CD8-positive, alpha-beta memory T cell (primary cell): ENCODE measurements at regions of chr3 and their contacts with region 1.

Region 1: GRCh38 chr3:125374501-125374995 is 577 bp downstream of the ZNF148 start:
- DNase-seq: peak in 3 of 5 donors; percentile 31 to 62 (median 41)
- H3K4me3 ChIP-seq: peak overlapping the region; percentile 95
- H3K4me3 Mint-ChIP-seq: peak overlapping the region; percentile 84 to 100 (median 95)
- H3K27ac ChIP-seq: peak overlapping the region; percentile 67
- H3K27ac Mint-ChIP-seq: peak overlapping the region; percentile 66 to 99 (median 96)
- H3K4me1 ChIP-seq: peaks cover 23% of the 10 kb centered on the region
- H3K4me1 Mint-ChIP-seq: peaks cover 44 to 56% (median 56%) of the 10 kb centered on the region in 3 donors
- H3K27me3 ChIP-seq: no peaks in the 10 kb centered on the region
- H3K27me3 Mint-ChIP-seq: no peaks in the 10 kb centered on the region

Region 2: GRCh38 chr3:125098611-125099291 is 275.8 kb before region 1 on chr3:
- CTCF ChIA-PET with region 1: no interaction called
- POLR2A ChIA-PET with region 1: no interaction called
- DNase-seq: no peak
- H3K4me3 ChIP-seq: no peak overlapping the region
- H3K4me3 Mint-ChIP-seq: no peak overlapping the region
- H3K27ac ChIP-seq: no peak overlapping the region
- H3K27ac Mint-ChIP-seq: no peak overlapping the region
- H3K4me1 ChIP-seq: no peaks in the 10 kb centered on the region
- H3K4me1 Mint-ChIP-seq: no peaks in the 10 kb centered on the region
- H3K27me3 ChIP-seq: no peaks in the 10 kb centered on the region
- H3K27me3 Mint-ChIP-seq: peaks cover 2 to 6% of the 10 kb centered on the region in 2 donors

Region 3: DNA sequence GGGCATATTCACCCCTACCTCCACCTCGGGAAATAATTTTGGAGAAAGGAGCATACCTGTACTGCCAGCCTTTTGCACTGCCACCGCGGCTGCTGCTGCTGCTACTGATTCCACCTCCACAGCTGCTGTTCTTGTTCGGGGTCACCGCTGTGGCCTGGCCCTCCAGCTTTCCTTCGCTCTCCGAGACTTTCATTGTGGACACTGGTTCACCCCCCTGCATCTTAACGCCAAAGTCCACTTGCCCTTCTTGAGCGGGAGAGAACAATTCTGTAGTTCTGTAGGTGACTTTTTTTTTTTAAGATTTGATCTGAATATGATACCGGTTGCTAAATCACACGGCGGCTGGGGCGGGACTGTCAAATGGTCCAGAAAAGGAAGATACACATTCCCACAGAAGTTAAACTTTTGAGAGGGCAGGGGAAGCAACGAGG is 220.0 kb after region 1 on chr3:
- CTCF ChIA-PET with region 1: no interaction called
- POLR2A ChIA-PET with region 1: interaction called, 10 read pairs
- DNase-seq: peak in 1 of 5 donors; percentile 12
- H3K4me3 ChIP-seq: peak overlapping the region; percentile 62
- H3K4me3 Mint-ChIP-seq: peak overlapping the region; percentile 92 to 100 (median 97)
- H3K27ac ChIP-seq: peak overlapping the region; percentile 65
- H3K27ac Mint-ChIP-seq: peak overlapping the region; percentile 86 to 99 (median 96)
- H3K4me1 ChIP-seq: peaks cover 23% of the 10 kb centered on the region
- H3K4me1 Mint-ChIP-seq: peaks cover 39 to 60% (median 46%) of the 10 kb centered on the region in 3 donors
- H3K27me3 ChIP-seq: no peaks in the 10 kb centered on the region
- H3K27me3 Mint-ChIP-seq: no peaks in the 10 kb centered on the region